ENCODE measurements at regions of chr15 and their contacts with region 1.

Region 1: DNA sequence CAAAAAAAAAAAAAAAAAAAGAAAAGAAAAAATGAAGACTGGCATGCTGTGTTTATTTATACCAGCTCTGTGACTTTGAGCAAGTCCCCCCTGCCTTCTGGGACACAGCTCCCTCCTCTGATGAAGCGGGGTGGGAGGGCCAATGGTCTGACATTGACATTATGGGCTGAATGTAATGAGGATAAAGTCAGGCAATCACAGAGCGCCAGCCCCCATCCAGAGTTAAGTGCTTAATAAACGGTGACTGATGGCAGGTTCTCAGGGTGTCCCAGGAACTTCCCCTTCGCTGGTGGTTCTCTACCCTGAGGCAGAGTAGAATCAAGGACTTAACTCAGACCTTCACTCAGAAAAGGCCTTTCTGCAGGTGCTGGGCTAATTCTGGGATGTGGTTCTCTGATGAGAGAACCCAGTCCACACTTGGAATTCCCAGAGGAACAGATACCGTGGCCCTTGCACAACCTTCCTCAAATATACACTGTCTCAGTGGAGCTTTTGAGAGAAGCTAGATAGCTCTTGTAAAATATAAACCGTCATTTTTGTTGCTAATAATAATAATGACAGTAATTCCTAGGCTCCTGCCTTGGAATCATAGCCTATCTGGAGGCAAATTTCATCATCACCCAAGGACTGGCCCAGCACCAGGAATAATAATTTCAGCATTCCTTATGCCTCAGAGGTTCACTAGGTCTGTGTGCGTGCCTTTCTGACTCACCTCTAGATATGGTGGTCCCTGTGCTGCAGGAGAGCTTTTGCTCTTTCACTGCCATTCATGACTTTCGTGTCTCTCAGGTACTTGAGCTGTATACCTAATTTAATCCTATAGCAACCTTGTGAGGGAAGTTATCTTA is 115.8 kb downstream of the RPLP1 start:
- DNase-seq: no peak
- ATAC-seq: no peak
- H3K4me3 ChIP-seq: no peak overlapping the region
- H3K27ac ChIP-seq: no peak overlapping the region
- H3K4me1 ChIP-seq: no peaks in the 10 kb centered on the region
- H3K27me3 ChIP-seq: no peaks in the 10 kb centered on the region
- CTCF ChIP-seq: no peak

Region 2: GRCh38 chr15:69452692-69453521 is 115.5 kb before region 1 on chr15 and contains the start of gene RPLP1:
- CTCF ChIA-PET with region 1: no interaction called
- POLR2A ChIA-PET with region 1: interaction called, 11 read pairs
- intact Hi-C with region 1: no loop called
- DNase-seq: peak; percentile 96
- ATAC-seq: peak; percentile 89
- H3K4me3 ChIP-seq: peak within 1 kb of the TSS; percentile 99
- H3K27ac ChIP-seq: peak within 1 kb of the TSS; percentile 29
- H3K4me1 ChIP-seq: peaks cover 17% of the 10 kb centered on the region
- H3K27me3 ChIP-seq: no peaks in the 10 kb centered on the region
- CTCF ChIP-seq: no peak
- total RNA-seq, gene RPLP1: 216 and 253 TPM in 2 replicates

Region 3: GRCh38 chr15:69509131-69509530 is 59.3 kb before region 1 on chr15:
- CTCF ChIA-PET with region 1: no interaction called
- POLR2A ChIA-PET with region 1: no interaction called
- intact Hi-C with region 1: no loop called
- DNase-seq: peak; percentile 12
- ATAC-seq: no peak
- H3K4me3 ChIP-seq: no peak overlapping the region
- H3K27ac ChIP-seq: no peak overlapping the region
- H3K4me1 ChIP-seq: peaks cover 5% of the 10 kb centered on the region; the same call in 1 of the 2 replicates
- H3K27me3 ChIP-seq: no peaks in the 10 kb centered on the region
- CTCF ChIP-seq: no peak

Region 4: DNA sequence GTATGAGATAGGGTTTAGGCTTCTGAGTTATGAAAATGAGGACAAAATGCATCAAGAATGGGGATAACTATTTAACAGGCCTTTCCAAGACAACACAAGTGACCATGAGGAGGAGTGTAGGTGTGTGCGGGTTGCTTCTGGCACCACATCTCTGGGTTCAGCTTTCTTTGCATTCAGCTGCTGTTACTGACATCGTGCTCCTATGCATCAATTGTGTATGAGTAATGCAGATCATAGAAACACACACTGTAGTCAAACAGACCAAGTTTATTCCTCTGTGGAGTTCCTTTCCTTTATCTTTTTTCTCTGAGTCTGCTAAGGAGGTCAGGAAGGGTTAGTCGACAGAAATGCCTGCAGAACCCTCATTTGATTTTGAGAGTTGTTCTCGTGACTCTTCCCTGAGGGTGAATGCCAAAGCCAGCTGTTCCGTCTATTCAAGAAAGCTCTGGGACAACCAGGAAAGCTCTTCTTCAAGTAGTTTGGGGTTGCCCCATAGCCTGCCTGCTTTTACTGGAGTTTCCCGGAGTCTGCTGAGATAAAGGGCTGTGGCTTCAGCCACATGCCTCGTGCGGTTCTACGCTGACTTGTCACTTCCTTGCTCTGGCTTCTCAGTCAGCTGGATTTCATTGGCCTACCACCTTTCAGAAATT is 666.0 kb after region 1 on chr15:
- CTCF ChIA-PET with region 1: no interaction called
- POLR2A ChIA-PET with region 1: interaction called, 12 read pairs
- intact Hi-C with region 1: no loop called
- DNase-seq: no peak
- ATAC-seq: no peak
- H3K4me3 ChIP-seq: no peak overlapping the region
- H3K27ac ChIP-seq: no peak overlapping the region
- H3K4me1 ChIP-seq: peaks cover 16% of the 10 kb centered on the region
- H3K27me3 ChIP-seq: no peaks in the 10 kb centered on the region
- CTCF ChIP-seq: no peak